ENCODE measurements at regions of chr1 and their contacts with region 1.

Region 1: DNA sequence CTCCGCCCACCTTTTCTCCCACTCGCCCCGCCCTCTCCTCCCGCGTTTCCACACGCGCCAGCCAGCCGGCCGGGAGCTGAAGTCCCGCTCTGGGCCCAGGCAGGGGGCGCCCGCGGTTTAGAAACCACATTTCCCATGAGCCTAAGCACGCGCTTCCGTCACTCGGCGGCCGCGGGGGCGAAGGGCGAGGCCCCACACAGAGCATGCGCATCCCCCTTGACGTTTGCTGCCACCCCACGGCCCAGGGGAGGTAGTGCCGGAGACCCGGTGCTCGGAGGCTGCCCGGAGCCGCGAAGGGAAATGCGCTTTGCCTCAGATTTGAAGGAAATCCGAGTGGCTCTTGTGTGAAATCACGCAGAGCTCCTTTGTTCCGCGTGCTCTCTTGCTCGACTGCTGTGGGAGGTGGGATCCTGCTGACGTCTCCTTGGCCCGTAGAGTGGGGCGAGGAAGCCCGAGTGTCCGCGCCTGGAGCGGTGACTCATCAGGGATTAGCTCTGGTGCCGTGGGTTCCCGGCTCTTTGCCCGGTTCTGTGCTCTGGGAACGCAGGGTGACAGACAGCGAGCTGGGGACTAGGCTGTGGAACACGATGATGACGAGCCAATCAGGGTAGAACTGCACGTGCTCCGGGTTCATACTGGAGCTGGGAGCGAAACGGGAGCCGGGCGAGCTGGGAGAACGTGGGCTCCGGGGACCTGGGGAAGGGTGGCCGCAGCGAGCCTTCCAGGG is 407 bp upstream of the B3GALNT2 start:
- DNase-seq: peak; percentile 95 to 99 (median 98)
- ATAC-seq: peak; percentile 93
- H3K4me3 ChIP-seq: peak overlapping the region; percentile 93
- H3K4me3 Mint-ChIP-seq: peak overlapping the region; percentile 83 to 98 (median 96)
- H3K27ac ChIP-seq: peak overlapping the region; percentile 90
- H3K27ac Mint-ChIP-seq: peak overlapping the region; percentile 94 to 98 (median 97)
- H3K4me1 ChIP-seq: peaks cover 0 to 9% of the 10 kb centered on the region in 2 donors
- H3K4me1 Mint-ChIP-seq: peaks cover 4 to 28% (median 20%) of the 10 kb centered on the region in 7 donors
- H3K27me3 ChIP-seq: no peaks in the 10 kb centered on the region
- H3K27me3 Mint-ChIP-seq: peaks cover 0 to 9% (median 0%) of the 10 kb centered on the region in 5 donors

Region 2: GRCh38 chr1:234599617-234600417 is 904.8 kb before region 1 on chr1:
- CTCF ChIA-PET with region 1: no interaction called
- POLR2A ChIA-PET with region 1: no interaction called
- intact Hi-C with region 1: loop called in 1 of 2 experiments (anchors 5 kb)
- DNase-seq: peak; percentile 52 to 88 (median 62)
- ATAC-seq: peak; percentile 74
- H3K4me3 ChIP-seq: peak overlapping the region; percentile 61
- H3K4me3 Mint-ChIP-seq: peak overlapping the region; percentile 75 to 97 (median 89)
- H3K27ac ChIP-seq: peak overlapping the region; percentile 96
- H3K27ac Mint-ChIP-seq: peak overlapping the region; percentile 87 to 99 (median 95)
- H3K4me1 ChIP-seq: peaks cover 51 to 54% of the 10 kb centered on the region in 2 donors
- H3K4me1 Mint-ChIP-seq: peaks cover 24 to 68% (median 56%) of the 10 kb centered on the region in 7 donors
- H3K27me3 ChIP-seq: no peaks in the 10 kb centered on the region
- H3K27me3 Mint-ChIP-seq: no peaks in the 10 kb centered on the region

Region 3: DNA sequence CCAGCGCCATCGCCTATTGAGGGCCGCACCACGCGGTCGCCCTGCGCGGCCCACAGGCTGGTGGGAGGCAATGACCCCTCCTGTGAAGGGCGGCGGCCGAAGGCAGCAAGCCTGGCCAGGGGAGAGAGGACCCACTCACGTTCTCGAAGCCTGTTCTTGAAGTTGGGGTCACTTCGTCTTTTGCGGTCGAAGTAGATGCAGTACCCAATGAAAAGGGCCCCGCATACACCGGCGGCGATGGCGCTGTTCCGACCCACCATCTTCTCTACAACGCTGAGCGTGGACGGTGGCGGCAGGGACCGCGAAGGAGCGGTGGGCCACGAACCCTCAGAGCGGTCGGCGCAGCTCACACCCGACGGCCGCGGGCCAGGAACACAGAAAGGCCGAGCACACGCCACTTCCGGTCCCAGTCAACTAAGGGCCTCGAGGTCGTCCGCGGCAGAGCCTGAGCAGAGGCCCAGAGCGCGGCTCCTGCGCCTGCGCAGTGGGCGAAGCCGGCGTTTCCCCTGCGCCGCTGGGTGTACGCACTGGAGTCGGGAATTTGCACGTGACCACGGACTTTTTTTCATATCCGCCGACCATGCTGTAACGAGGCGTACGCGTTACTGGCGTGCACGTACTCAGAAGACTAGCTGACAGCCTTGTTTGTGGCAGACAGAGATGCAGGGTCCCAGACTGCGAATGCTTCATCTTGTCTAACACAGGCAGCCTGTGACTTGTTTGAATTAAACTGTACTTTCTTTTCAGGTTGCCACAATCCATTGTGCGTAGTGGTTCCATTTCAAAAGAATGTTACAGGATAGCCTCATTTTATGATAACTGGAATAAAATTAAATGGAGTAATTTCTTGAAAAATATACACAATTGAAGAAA is 376.0 kb before region 1 on chr1 and contains the start of gene TOMM20:
- CTCF ChIA-PET with region 1: no interaction called
- POLR2A ChIA-PET with region 1: interaction called, 3 read pairs
- intact Hi-C with region 1: loop called (anchors 1 kb)
- DNase-seq: peak; percentile 91 to 97 (median 95)
- ATAC-seq: peak; percentile 97
- H3K4me3 ChIP-seq: peak within 1 kb of the TSS; percentile 98
- H3K4me3 Mint-ChIP-seq: peak within 1 kb of the TSS; percentile 88 to 99 (median 96)
- H3K27ac ChIP-seq: peak within 1 kb of the TSS; percentile 94
- H3K27ac Mint-ChIP-seq: peak within 1 kb of the TSS; percentile 93 to 99 (median 98)
- H3K4me1 ChIP-seq: peaks cover 22 to 24% of the 10 kb centered on the region in 2 donors
- H3K4me1 Mint-ChIP-seq: peaks cover 17 to 55% (median 42%) of the 10 kb centered on the region in 7 donors
- H3K27me3 ChIP-seq: no peaks in the 10 kb centered on the region
- H3K27me3 Mint-ChIP-seq: no peaks in the 10 kb centered on the region
- total RNA-seq, gene TOMM20: 88.0 to 124 (median 100) TPM

Region 4: DNA sequence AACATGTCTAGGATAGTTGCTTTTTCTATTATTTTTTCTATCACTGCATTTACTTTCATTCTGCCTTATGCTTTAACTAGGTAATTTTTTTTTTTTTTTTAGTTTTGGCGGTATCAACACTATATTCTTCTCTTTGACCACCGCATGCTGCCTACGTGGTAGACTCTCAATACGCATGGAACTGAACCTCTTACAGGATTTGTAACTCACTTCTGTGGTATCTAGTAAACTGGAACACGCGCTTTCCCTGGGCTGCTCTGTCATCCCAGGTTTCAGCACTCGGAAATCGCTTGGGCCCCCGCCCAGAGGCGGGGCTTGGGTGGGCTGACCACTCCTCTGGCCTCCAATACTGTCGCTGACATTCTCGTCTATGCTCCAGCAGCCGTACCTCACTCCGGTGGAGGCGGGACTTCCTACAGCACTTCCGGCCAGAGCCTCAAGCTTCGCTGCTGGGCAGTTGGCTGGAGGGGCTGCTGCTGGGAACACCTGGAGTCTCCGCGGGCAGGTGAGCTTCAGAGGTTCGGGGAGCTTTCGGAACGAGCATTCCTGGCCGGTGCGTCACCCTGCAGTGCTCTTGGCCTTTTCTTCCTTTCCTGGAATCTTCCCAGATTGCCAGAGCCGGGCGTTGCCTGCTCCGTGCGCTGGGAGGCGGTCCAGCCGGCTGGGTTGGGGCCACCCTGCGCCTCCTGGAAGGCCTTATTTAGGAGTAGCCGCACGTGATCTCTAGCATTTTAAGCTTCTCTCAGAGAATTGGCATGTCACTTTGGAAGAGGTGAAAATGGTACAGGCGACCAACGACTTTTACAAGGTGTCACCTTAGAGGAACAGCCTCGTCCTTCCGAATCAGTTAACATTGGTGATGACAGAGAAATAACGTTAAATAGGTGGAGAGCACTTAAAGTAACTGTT is 137.4 kb before region 1 on chr1 and contains the start of gene TBCE:
- CTCF ChIA-PET with region 1: no interaction called
- POLR2A ChIA-PET with region 1: interaction called, 3 read pairs
- intact Hi-C with region 1: loop called in 1 of 2 experiments (anchors 1 kb)
- DNase-seq: peak; percentile 61 to 89 (median 63)
- ATAC-seq: peak; percentile 99
- H3K4me3 ChIP-seq: peak within 1 kb of the TSS; percentile 90
- H3K4me3 Mint-ChIP-seq: peak within 1 kb of the TSS; percentile 91 to 99 (median 98)
- H3K27ac ChIP-seq: peak within 1 kb of the TSS; percentile 74
- H3K27ac Mint-ChIP-seq: peak within 1 kb of the TSS; percentile 86 to 97 (median 93)
- H3K4me1 ChIP-seq: peaks cover 0 to 11% of the 10 kb centered on the region in 2 donors
- H3K4me1 Mint-ChIP-seq: peaks cover 13 to 41% (median 38%) of the 10 kb centered on the region in 7 donors
- H3K27me3 ChIP-seq: no peaks in the 10 kb centered on the region
- H3K27me3 Mint-ChIP-seq: no peaks in the 10 kb centered on the region
- total RNA-seq, gene TBCE: 16.8 to 26.1 (median 20.6) TPM

Region 5: DNA sequence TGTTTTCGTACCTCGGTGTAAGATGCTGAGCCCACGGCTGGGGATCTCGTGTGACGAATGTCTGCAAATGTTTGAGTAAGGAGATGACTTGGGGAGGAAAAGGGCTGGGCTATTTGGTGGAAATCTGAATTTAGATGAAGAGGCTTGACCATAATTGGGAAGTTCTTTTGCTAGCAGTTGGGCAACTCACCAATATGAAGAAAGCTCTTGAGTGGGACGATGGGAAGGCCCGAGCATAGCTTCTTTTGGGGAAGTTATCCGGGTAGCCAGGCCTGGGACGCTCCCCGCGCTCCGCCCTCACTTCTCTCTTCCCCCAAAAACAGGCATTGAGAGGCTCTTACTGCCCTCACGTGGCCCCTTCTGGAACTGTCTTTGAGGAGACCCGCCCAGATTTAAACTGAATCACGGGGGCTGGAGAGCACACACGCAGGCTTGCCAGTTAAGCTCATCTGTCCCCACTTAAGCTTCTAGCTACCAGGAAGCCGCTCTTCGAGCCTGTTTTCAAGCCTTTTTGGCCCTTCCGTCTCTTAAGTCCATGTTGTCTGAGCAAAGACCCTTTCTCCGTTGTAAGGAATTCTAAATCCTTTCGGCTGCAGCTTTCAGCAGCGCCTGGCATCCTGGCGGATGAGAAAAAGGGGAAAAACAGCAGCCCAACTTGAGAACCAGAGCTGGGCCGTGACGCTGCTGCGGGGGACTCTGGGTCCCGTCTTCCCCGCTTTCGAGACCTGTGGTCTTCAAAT is 467.1 kb after region 1 on chr1:
- CTCF ChIA-PET with region 1: interaction called, 4 read pairs
- POLR2A ChIA-PET with region 1: interaction called, 10 read pairs
- intact Hi-C with region 1: no loop called
- DNase-seq: peak; percentile 71 to 87 (median 84)
- ATAC-seq: peak; percentile 98
- H3K4me3 ChIP-seq: peak overlapping the region; percentile 14
- H3K4me3 Mint-ChIP-seq: peak overlapping the region; percentile 67 to 82 (median 76)
- H3K27ac ChIP-seq: peak overlapping the region; percentile 59
- H3K27ac Mint-ChIP-seq: peak overlapping the region; percentile 87 to 95 (median 90)
- H3K4me1 ChIP-seq: peaks cover 9 to 14% of the 10 kb centered on the region in 2 donors
- H3K4me1 Mint-ChIP-seq: peaks cover 9 to 19% (median 13%) of the 10 kb centered on the region in 7 donors
- H3K27me3 ChIP-seq: no peaks in the 10 kb centered on the region
- H3K27me3 Mint-ChIP-seq: peaks cover 0 to 26% (median 0%) of the 10 kb centered on the region in 5 donors

Region 6: DNA sequence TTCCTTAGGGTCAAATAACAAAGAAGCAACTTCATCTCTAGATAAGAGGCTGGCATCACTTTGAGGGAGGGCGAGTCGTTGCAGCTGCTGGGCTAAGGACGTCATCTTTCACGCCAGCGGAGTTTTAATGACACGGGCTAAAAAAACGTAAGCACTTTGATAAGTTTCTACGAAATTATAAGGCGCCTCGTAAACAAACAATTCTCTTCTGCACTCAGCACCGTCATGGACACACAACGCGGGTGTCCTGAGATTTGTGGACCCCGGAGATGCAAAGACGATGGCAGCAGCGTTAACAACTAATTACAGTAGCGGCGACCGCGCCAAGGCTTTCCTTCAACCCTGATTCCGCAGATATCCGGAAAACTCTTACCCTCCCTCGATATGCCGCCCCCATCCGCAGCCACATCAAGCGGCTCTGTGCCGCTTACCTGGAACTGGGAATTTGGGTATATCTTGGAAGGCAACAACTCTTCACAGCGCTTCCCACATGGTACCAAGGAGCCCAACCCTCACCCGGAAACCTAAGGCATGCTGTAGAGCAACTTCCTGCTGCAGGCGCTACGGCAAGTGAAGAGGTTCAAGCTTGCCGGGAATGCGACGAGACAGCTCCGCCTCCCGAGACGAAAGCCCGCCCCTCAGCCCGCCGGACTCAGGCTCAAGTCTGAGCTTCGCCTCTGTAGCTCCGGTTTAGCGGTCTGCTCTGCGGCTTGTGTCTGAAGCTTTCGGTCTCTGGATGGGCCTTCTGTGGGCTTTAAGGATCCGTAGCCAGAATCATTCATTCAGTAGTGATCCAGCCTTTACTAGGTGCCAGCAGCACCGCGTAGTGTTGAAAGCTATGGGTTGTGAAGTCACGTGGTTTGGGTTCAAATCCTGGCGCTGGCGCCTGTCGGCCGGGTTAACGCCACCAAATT is 1099.6 kb after region 1 on chr1 and contains the start of gene HEATR1:
- CTCF ChIA-PET with region 1: no interaction called
- POLR2A ChIA-PET with region 1: no interaction called
- intact Hi-C with region 1: loop called in 1 of 2 experiments (anchors 10 kb)
- DNase-seq: peak; percentile 58 to 88 (median 84)
- ATAC-seq: peak; percentile 94
- H3K4me3 ChIP-seq: peak within 1 kb of the TSS; percentile 88
- H3K4me3 Mint-ChIP-seq: peak within 1 kb of the TSS; percentile 91 to 99 (median 98)
- H3K27ac ChIP-seq: peak within 1 kb of the TSS; percentile 79
- H3K27ac Mint-ChIP-seq: peak within 1 kb of the TSS; percentile 93 to 98 (median 97)
- H3K4me1 ChIP-seq: peaks cover 13 to 14% of the 10 kb centered on the region in 2 donors
- H3K4me1 Mint-ChIP-seq: peaks cover 20 to 49% (median 32%) of the 10 kb centered on the region in 7 donors
- H3K27me3 ChIP-seq: peaks cover 0 to 4% of the 10 kb centered on the region in 2 donors
- H3K27me3 Mint-ChIP-seq: peaks cover 4 to 14% (median 13%) of the 10 kb centered on the region in 5 donors
- total RNA-seq, gene HEATR1: 29.3 to 58.7 (median 45.8) TPM